Heart right ventricle (tissue), 16 donors: ENCODE measurements at regions of chr2 and their contacts with region 1.

Region 1: DNA sequence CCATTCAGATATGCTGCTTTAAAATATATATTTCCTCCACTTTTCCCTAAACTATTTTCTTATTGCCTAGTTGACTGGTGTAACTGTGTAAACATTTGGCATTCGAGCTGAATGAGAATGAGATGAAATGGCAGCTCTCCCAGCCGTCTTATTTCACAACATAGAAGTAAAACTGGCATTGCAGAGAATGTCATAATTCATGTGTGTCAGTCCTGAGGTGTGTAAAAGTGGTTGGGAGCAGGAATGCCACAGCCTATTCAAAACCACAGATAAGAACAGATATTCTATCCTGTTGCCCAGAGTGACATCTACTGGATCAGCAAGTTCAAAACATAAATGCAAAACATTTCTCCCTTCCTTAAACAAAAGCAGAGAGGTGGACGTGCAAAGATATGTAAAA is 565.5 kb upstream of the CHAC2 start:
- DNase-seq: no peak
- ATAC-seq: peak in 5 of 8 donors; percentile 37 to 92 (median 63)
- H3K4me3 ChIP-seq: no peak overlapping the region
- H3K27ac ChIP-seq: no peak overlapping the region
- H3K4me1 ChIP-seq: no peaks in the 10 kb centered on the region
- H3K27me3 ChIP-seq: no peaks in the 10 kb centered on the region
- CTCF ChIP-seq: peak in 5 of 9 donors; percentile 12 to 37 (median 32)

Region 2: GRCh38 chr2:52810460-52810859 is 391.6 kb before region 1 on chr2:
- intact Hi-C with region 1: loop called in 2 of 10 experiments (anchors 10 kb)
- DNase-seq: no peak
- ATAC-seq: peak in 7 of 8 donors; percentile 34 to 75 (median 70)
- H3K4me3 ChIP-seq: no peak overlapping the region
- H3K27ac ChIP-seq: no peak overlapping the region
- H3K4me1 ChIP-seq: peaks cover 0 to 7% (median 0%) of the 10 kb centered on the region in 9 donors
- H3K27me3 ChIP-seq: no peaks in the 10 kb centered on the region
- CTCF ChIP-seq: peak in 8 of 9 donors; percentile 12 to 62 (median 51)